Sigmoid colon (tissue), 7 donors: ENCODE measurements at regions of chr2 and their contacts with region 1.

Region 1: GRCh38 chr2:99337113-99338028 is at the start of gene EIF5B:
- DNase-seq: peak; percentile 98
- H3K4me3 ChIP-seq: peak within 1 kb of the TSS; percentile 73 to 92 (median 88)
- H3K27ac ChIP-seq: peak within 1 kb of the TSS; percentile 90 to 95 (median 94)
- H3K4me1 ChIP-seq: peaks cover 0 to 52% (median 45%) of the 10 kb centered on the region in 4 donors
- H3K27me3 ChIP-seq: no peaks in the 10 kb centered on the region
- CTCF ChIP-seq: peak in 3 of 4 experiments; percentile 37 to 58 (median 46)
- EP300 ChIP-seq: no peak
- POLR2A ChIP-seq: peak; percentile 13 to 63
- total RNA-seq, gene EIF5B: 32.7 to 44.3 (median 40.8) TPM

Region 2: DNA sequence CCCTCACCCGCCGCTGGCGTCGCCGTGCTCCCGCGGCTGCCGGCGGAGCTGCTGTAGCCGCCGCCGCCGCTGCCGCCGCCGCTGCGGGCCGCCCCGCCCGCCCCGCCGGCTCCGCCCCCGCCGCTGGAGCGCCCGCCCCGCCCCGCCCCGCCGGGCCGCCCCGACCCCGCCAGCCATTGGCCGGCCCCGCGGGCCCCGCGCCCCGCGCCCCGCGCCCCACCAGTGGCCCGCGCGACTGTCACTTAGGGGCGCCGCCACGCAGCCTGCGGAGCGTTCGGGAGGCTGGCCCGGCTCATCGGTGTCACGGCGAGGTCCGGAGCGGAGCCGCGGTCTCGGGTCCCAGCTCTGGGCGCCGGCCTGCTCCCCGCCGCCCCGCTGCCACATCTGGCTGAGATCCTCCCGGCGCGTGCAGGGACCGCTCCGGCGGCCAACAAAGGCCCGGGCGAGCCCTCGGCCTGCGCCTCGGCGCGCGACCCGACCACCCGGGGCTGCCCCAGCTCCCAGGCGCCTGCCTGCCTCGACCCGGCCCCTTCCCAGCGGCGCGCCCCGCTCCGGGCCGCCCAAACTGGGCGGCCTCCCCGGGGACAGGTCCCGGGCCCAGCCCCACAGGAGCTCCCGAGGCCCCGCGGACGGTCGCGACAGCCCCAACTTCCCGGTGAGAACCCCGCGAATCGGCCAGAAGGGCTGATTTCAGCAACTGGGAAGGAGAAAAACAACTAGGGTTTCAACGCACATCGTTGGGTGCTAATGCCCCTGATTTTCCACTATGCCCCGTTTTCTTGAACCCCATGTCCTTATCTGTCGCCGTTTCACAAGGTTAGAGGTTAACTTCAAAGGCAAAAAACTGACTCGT is 606.1 kb before region 1 on chr2 and contains the start of gene MGAT4A:
- intact Hi-C with region 1: loop called (anchors 5 kb)
- DNase-seq: peak; percentile 90
- H3K4me3 ChIP-seq: peak within 1 kb of the TSS; percentile 64 to 94 (median 90)
- H3K27ac ChIP-seq: peak within 1 kb of the TSS; percentile 88 to 93 (median 90)
- H3K4me1 ChIP-seq: peaks cover 0 to 35% (median 33%) of the 10 kb centered on the region in 4 donors
- H3K27me3 ChIP-seq: no peaks in the 10 kb centered on the region
- CTCF ChIP-seq: no peak
- EP300 ChIP-seq: no peak
- POLR2A ChIP-seq: no peak
- total RNA-seq, gene MGAT4A: 9.5 to 28.2 (median 16.9) TPM

Region 3: DNA sequence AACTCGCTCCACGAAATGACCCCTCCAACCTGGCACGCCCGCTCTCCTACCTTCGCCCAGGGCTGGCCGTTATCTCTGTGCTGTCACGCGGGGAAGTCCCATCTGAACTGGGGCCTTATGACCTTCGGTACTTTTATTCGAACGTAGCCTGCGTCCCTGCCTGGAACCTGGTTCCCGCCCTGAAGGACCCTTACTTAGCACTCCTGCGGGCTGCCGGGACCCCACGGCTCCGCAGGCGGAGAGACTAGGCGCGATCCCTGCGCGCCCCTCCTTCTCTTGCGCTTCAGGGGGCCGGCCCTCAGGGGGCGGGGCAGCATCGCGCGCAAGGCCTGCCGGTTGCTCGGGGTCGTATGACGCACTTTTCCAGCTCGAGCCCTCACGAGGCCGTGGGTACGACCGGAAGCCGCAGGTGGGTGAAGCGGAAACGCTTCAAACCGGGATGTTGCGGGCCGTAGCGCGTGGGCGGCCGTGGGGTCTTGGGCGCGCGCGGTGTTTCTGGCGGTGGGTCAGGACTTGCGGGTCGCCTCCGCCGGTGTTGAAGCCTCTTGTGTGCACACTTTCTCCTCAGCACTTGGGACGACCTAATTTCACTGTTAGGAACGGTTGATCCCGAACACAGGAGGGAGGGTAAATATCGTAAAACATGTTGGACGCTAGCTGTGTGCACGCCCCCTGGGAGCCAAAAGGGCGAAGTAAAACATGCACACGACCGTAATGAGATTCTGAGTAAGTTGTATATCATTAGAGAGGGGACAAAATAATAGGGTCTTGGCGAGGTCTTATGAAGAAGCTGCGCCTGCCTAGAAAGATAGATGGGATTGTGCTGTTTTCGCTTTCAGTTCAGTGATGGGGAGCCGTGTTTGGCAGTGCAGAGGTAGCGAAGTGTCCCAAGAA is 182.5 kb before region 1 on chr2 and contains the starts of genes LIPT1 and TSGA10:
- intact Hi-C with region 1: loop called (anchors 2 kb)
- DNase-seq: peak; percentile 97
- H3K4me3 ChIP-seq: peak within 1 kb of the TSS; percentile 61 to 85 (median 66)
- H3K27ac ChIP-seq: peak within 1 kb of the TSS; percentile 83 to 91 (median 84)
- H3K4me1 ChIP-seq: peaks cover 0 to 19% (median 18%) of the 10 kb centered on the region in 4 donors
- H3K27me3 ChIP-seq: no peaks in the 10 kb centered on the region
- CTCF ChIP-seq: no peak
- EP300 ChIP-seq: peak in 1 of 4 donors; percentile 96
- POLR2A ChIP-seq: peak; percentile 68 to 78
- total RNA-seq, gene LIPT1: 4.8 to 9.5 (median 7.4) TPM
- total RNA-seq, gene TSGA10: 1.4 to 8.4 (median 3.8) TPM

Region 4: GRCh38 chr2:99180755-99181623 is 156.4 kb before region 1 on chr2 and contains the starts of genes MITD1 and MRPL30:
- intact Hi-C with region 1: loop called (anchors 5 kb)
- DNase-seq: peak; percentile 96
- H3K4me3 ChIP-seq: peak within 1 kb of the TSS; percentile 61 to 81 (median 77)
- H3K27ac ChIP-seq: peak within 1 kb of the TSS; percentile 76 to 81 (median 78)
- H3K4me1 ChIP-seq: peaks cover 0 to 38% (median 34%) of the 10 kb centered on the region in 4 donors
- H3K27me3 ChIP-seq: no peaks in the 10 kb centered on the region
- CTCF ChIP-seq: no peak
- EP300 ChIP-seq: no peak
- POLR2A ChIP-seq: peak in 1 of 2 donors; percentile 34
- total RNA-seq, gene MITD1: 18.3 to 30.9 (median 23.5) TPM
- total RNA-seq, gene MRPL30: 36.4 to 40.5 (median 38.1) TPM

Region 5: GRCh38 chr2:99489761-99490622 is 152.6 kb after region 1 on chr2 and contains the start of gene REV1:
- intact Hi-C with region 1: loop called (anchors 2 kb)
- DNase-seq: peak; percentile 95
- H3K4me3 ChIP-seq: peak within 1 kb of the TSS; percentile 61 to 99 (median 96)
- H3K27ac ChIP-seq: peak within 1 kb of the TSS; percentile 95 to 100 (median 98)
- H3K4me1 ChIP-seq: peaks cover 0 to 29% (median 21%) of the 10 kb centered on the region in 4 donors
- H3K27me3 ChIP-seq: no peaks in the 10 kb centered on the region
- CTCF ChIP-seq: peak; percentile 68 to 89 (median 70)
- EP300 ChIP-seq: no peak
- POLR2A ChIP-seq: no peak
- total RNA-seq, gene REV1: 41.7 to 73.1 (median 46.7) TPM

Region 6: GRCh38 chr2:99662761-99663341 is 325.5 kb after region 1 on chr2:
- intact Hi-C with region 1: no loop called
- DNase-seq: no peak
- H3K4me3 ChIP-seq: no peak overlapping the region
- H3K27ac ChIP-seq: no peak overlapping the region
- H3K4me1 ChIP-seq: peaks cover 0 to 30% (median 16%) of the 10 kb centered on the region in 4 donors
- H3K27me3 ChIP-seq: no peaks in the 10 kb centered on the region
- CTCF ChIP-seq: no peak
- EP300 ChIP-seq: no peak
- POLR2A ChIP-seq: no peak

Region 7: GRCh38 chr2:101252408-101253012 is 1915.1 kb after region 1 on chr2 and contains the start of gene CNOT11:
- intact Hi-C with region 1: loop called (anchors 10 kb)
- DNase-seq: peak; percentile 99
- H3K4me3 ChIP-seq: peak within 1 kb of the TSS; percentile 80 to 99 (median 98)
- H3K27ac ChIP-seq: peak within 1 kb of the TSS; percentile 88 to 97 (median 94)
- H3K4me1 ChIP-seq: peaks cover 0 to 33% (median 31%) of the 10 kb centered on the region in 4 donors
- H3K27me3 ChIP-seq: no peaks in the 10 kb centered on the region
- CTCF ChIP-seq: peak in 1 of 4 experiments; percentile 8
- EP300 ChIP-seq: no peak
- POLR2A ChIP-seq: peak; percentile 49 to 74
- total RNA-seq, gene CNOT11: 21.4 to 27.4 (median 22.1) TPM